ENCODE measurements at regions of chr1 and their contacts with region 1.

Region 1: GRCh38 chr1:211476200-211476849 is 15.6 kb downstream of the RD3 start:
- DNase-seq: peak; percentile 79 to 90
- H3K4me3 ChIP-seq: no peak overlapping the region
- H3K27ac ChIP-seq: no peak overlapping the region
- H3K4me1 ChIP-seq: peaks cover 0 to 17% (median 7%) of the 10 kb centered on the region in 4 donors
- H3K27me3 ChIP-seq: peaks cover 0 to 25% (median 0%) of the 10 kb centered on the region in 3 donors
- CTCF ChIP-seq: peak in 4 of 7 experiments; percentile 50 to 83 (median 74)
- EP300 ChIP-seq: no peak
- POLR2A ChIP-seq: no peak

Region 2: DNA sequence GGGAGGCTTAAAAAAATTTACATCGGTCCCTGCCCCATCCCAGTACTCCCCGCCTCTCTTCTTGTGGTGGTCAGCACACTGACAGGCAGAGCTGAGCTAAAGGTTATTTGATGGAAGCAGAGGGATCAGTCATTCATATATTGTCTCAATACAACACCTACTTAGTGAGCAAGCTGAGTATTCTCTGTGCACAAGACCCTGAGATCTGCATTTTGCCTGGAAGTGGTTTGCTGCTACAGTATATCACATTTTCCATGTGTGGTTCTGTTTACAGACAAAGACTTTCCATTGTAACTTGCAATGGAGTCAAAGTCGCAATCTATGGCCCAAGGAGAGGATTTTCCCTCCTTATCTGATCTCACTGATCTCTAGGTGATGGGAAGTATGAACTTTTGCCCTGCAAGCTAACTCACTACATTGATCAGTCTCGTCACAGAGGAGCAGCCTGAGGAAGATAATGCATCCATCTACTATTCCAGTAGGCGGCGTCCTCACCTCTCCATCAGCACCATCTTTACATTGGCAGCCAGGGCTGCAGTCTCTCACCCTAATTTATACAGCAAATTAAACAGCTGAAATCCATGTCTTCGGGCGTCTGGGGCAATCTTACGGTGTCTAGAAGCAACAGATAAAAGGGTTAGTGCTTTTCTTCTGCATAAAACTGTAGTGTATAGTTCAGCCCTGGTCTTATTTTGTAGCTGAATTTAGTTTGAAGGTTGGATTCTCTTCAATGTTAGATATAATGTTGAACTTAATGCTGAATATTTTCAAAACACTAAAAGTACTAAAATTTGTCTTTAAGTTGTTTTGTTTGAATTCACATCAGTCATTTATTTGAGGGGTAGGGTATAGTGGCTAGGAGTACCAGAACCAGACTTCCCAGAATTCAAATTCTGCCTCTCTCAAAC is 152.9 kb before region 1 on chr1:
- intact Hi-C with region 1: loop called (anchors 10 kb)
- DNase-seq: peak; percentile 70 to 89
- H3K4me3 ChIP-seq: no peak overlapping the region
- H3K27ac ChIP-seq: no peak overlapping the region
- H3K4me1 ChIP-seq: peaks cover 11 to 27% (median 21%) of the 10 kb centered on the region in 4 donors
- H3K27me3 ChIP-seq: no peaks in the 10 kb centered on the region
- CTCF ChIP-seq: peak in 5 of 7 experiments; percentile 55 to 82 (median 72)
- EP300 ChIP-seq: no peak
- POLR2A ChIP-seq: no peak